ENCODE measurements at regions of chr18 and their contacts with region 1.

Region 1: DNA sequence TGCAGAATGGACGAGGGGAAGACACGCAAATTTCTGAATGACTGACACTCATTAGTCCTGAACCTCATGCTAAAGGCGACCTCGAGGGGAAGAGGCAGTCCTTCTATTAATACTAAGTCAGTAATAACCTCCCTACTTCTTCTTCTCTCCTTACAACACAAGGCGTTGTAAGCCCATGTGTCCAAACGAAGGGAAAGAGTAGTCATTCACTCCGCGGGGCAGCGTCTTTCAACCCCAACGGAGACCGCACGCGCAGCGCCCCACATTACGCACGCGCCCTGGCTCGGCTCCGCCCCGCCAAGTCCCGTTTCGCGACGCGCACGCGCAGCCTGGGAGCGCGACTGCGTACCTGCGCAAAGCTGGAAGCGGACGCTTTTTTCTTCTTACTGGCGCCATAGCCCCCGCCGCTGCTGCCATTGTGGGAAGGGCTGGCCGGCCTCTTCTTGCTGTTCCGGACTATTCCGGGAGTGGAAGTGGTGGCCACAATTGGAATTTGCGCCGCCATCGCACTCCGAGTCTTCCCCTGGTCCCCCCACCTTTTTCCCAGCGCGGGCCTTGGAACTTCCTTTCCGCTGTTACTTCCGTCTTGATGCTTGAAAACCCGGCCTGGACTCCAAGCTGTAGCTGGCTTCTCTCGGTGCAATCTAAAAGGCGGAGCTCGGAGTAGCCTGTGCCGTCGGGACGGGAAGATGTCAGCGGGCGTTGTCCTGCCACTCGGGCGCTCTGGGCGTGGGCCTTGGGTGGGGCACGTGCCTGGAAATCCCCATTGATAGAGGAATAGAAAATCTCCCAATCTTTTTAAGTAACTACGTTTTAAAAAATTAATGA is at the start of gene INO80C:
- DNase-seq: peak; percentile 97 to 99 (median 98)
- H3K4me3 ChIP-seq: peak within 1 kb of the TSS; percentile 56 to 83 (median 72)
- H3K4me3 Mint-ChIP-seq: peak within 1 kb of the TSS; percentile 95 to 98
- H3K27ac ChIP-seq: peak within 1 kb of the TSS; percentile 92 to 98
- H3K27ac Mint-ChIP-seq: peak within 1 kb of the TSS; percentile 96 to 100 (median 100)
- H3K4me1 ChIP-seq: peaks cover 48 to 54% of the 10 kb centered on the region in 2 donors
- H3K4me1 Mint-ChIP-seq: peaks cover 62% of the 10 kb centered on the region
- H3K27me3 ChIP-seq: no peaks in the 10 kb centered on the region
- H3K27me3 Mint-ChIP-seq: peaks cover 0 to 8% (median 3%) of the 10 kb centered on the region in 3 donors
- CTCF ChIP-seq: no peak
- polyA plus RNA-seq, gene INO80C: 17.7 to 27.9 (median 22.3) TPM

Region 2: GRCh38 chr18:35343936-35344735 is 153.4 kb before region 1 on chr18 and contains the start of gene ZNF24:
- intact Hi-C with region 1: loop called in 1 of 2 experiments (anchors 5 kb)
- DNase-seq: peak; percentile 91 to 94 (median 93)
- H3K4me3 ChIP-seq: peak within 1 kb of the TSS; percentile 74 to 87 (median 84)
- H3K4me3 Mint-ChIP-seq: peak within 1 kb of the TSS; percentile 91 to 92
- H3K27ac ChIP-seq: peak within 1 kb of the TSS; percentile 96 to 98
- H3K27ac Mint-ChIP-seq: peak within 1 kb of the TSS; percentile 92 to 99 (median 98)
- H3K4me1 ChIP-seq: peaks cover 29 to 37% of the 10 kb centered on the region in 2 donors
- H3K4me1 Mint-ChIP-seq: peaks cover 46% of the 10 kb centered on the region
- H3K27me3 ChIP-seq: no peaks in the 10 kb centered on the region
- H3K27me3 Mint-ChIP-seq: peaks cover 0 to 1% (median 0%) of the 10 kb centered on the region in 3 donors
- CTCF ChIP-seq: no peak
- polyA plus RNA-seq, gene ZNF24: 12.9 to 64.4 (median 54.3) TPM

Region 3: GRCh38 chr18:35386600-35387351 is 110.8 kb before region 1 on chr18:
- intact Hi-C with region 1: loop called in 1 of 2 experiments (anchors 5 kb)
- DNase-seq: peak; percentile 69 to 75 (median 69)
- H3K4me3 ChIP-seq: no peak overlapping the region
- H3K4me3 Mint-ChIP-seq: no peak overlapping the region
- H3K27ac ChIP-seq: no peak overlapping the region
- H3K27ac Mint-ChIP-seq: peak overlapping the region in 1 of 7 donors; percentile 15
- H3K4me1 ChIP-seq: no peaks in the 10 kb centered on the region
- H3K4me1 Mint-ChIP-seq: peaks cover 7% of the 10 kb centered on the region
- H3K27me3 ChIP-seq: peaks cover 0 to 2% of the 10 kb centered on the region in 2 donors
- H3K27me3 Mint-ChIP-seq: peaks cover 0 to 4% (median 2%) of the 10 kb centered on the region in 3 donors
- CTCF ChIP-seq: peak; percentile 98

Region 4: DNA sequence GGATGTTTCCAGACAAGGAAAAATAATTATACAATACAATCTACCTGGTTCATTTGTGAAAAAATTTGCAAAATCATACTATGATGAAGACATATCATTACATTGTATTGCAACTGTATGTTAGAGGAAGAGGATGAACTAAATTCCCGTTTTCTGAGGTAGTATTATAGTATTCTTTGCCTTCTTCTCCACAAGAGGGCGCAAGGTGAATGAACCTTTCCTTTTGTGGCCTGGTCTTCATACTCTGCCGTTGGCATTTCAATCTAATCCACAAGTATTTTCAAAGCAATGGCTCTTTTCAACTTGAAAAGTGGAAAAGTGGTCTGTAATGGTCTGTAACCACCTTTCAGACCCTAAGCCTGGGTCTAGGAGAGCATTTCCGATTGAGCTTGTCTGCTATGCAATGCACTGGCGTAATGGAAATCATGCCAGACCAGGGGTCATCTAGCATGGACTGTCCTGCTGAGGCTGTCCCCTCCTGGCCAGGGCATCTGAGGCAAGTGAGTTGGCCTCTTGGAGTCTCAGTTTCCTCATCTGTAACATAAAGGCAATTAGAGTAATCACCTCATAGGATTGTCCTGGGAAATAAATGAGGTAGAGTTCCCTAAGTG is 89.6 kb before region 1 on chr18:
- intact Hi-C with region 1: loop called in 1 of 2 experiments (anchors 5 kb)
- DNase-seq: peak; percentile 61 to 81 (median 72)
- H3K4me3 ChIP-seq: no peak overlapping the region
- H3K4me3 Mint-ChIP-seq: no peak overlapping the region
- H3K27ac ChIP-seq: no peak overlapping the region
- H3K27ac Mint-ChIP-seq: no peak overlapping the region
- H3K4me1 ChIP-seq: peaks cover 20 to 34% of the 10 kb centered on the region in 2 donors
- H3K4me1 Mint-ChIP-seq: peaks cover 30% of the 10 kb centered on the region
- H3K27me3 ChIP-seq: no peaks in the 10 kb centered on the region
- H3K27me3 Mint-ChIP-seq: peaks cover 2 to 9% (median 3%) of the 10 kb centered on the region in 3 donors
- CTCF ChIP-seq: peak; percentile 85

Region 5: DNA sequence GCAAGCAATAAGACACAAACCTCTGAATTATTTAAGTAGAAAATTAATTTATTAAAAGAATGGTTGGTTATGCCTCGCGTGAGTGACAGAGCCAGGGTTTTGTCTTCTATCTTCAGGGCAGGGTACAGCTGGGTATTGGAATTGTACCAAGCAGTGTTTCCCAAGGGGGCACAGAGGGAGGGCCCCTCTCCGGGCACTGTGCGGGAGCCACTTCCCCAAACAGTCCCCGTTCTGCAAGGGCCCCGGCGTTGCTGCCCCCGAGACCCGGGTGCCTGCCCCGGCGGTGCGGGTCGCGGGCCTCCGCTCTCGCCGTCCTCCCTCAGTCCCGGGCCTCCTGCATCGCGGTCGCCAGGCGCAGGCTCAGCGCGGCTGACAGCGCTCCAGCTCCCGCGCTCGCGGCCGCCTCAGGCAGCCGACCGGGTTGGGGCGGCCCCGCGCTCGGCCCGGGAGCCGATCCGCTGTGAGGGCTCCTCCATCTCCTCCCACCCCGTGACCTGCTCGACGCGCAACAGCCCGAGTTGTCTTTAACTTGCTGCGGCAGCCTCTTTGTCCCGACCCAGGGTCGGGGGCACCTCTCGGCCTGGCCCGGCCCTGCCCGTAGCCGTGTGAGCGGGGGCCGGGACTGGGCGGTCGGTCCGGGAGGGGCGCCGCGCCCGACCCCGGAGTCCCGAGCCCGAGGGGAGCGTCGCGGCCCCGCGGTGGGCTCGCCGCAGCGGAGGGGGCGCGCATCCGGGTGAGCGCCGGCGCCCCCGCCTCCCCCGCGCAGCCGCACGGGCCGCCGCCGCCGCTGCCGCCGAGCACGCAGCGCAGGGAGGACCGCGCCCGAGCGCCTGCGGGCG is 83.3 kb after region 1 on chr18:
- intact Hi-C with region 1: loop called in 1 of 2 experiments (anchors 5 kb)
- DNase-seq: peak; percentile 49 to 53 (median 52)
- H3K4me3 ChIP-seq: peak overlapping the region; percentile 46 to 75 (median 70)
- H3K4me3 Mint-ChIP-seq: peak overlapping the region; percentile 76 to 83
- H3K27ac ChIP-seq: peak overlapping the region in 1 of 2 donors; percentile 78
- H3K27ac Mint-ChIP-seq: peak overlapping the region in 3 of 7 donors; percentile 54 to 76 (median 69)
- H3K4me1 ChIP-seq: peaks cover 16 to 24% of the 10 kb centered on the region in 2 donors
- H3K4me1 Mint-ChIP-seq: peaks cover 29% of the 10 kb centered on the region
- H3K27me3 ChIP-seq: peaks cover 0 to 2% of the 10 kb centered on the region in 2 donors
- H3K27me3 Mint-ChIP-seq: peaks cover 0 to 1% (median 1%) of the 10 kb centered on the region in 3 donors
- CTCF ChIP-seq: no peak

Region 6: GRCh38 chr18:36543991-36544725 is 1046.6 kb after region 1 on chr18:
- intact Hi-C with region 1: no loop called
- DNase-seq: no peak
- H3K4me3 ChIP-seq: no peak overlapping the region
- H3K4me3 Mint-ChIP-seq: no peak overlapping the region
- H3K27ac ChIP-seq: no peak overlapping the region
- H3K27ac Mint-ChIP-seq: no peak overlapping the region
- H3K4me1 ChIP-seq: no peaks in the 10 kb centered on the region
- H3K4me1 Mint-ChIP-seq: no peaks in the 10 kb centered on the region
- H3K27me3 ChIP-seq: no peaks in the 10 kb centered on the region
- H3K27me3 Mint-ChIP-seq: peaks cover 0 to 2% (median 1%) of the 10 kb centered on the region in 3 donors
- CTCF ChIP-seq: no peak